ENCODE measurements at regions of chr14 and their contacts with region 1.

Region 1: GRCh38 chr14:22646570-22647254 is 2.6 kb upstream of the OR6J1 start:
- DNase-seq: no peak
- ATAC-seq: no peak
- H3K4me3 ChIP-seq: no peak overlapping the region
- H3K27ac ChIP-seq: peak overlapping the region in 1 of 10 donors; percentile 33
- H3K4me1 ChIP-seq: peaks cover 0 to 14% (median 0%) of the 10 kb centered on the region in 9 donors
- H3K27me3 ChIP-seq: peaks cover 0 to 6% (median 0%) of the 10 kb centered on the region in 7 donors
- CTCF ChIP-seq: no peak

Region 2: GRCh38 chr14:22418631-22419030 is 228.1 kb before region 1 on chr14:
- intact Hi-C with region 1: loop called in 1 of 10 experiments (anchors 10 kb)
- DNase-seq: no peak
- ATAC-seq: no peak
- H3K4me3 ChIP-seq: no peak overlapping the region
- H3K27ac ChIP-seq: no peak overlapping the region
- H3K4me1 ChIP-seq: peaks cover 0 to 7% (median 0%) of the 10 kb centered on the region in 9 donors
- H3K27me3 ChIP-seq: peaks cover 0 to 6% (median 0%) of the 10 kb centered on the region in 7 donors
- CTCF ChIP-seq: no peak

Region 3: DNA sequence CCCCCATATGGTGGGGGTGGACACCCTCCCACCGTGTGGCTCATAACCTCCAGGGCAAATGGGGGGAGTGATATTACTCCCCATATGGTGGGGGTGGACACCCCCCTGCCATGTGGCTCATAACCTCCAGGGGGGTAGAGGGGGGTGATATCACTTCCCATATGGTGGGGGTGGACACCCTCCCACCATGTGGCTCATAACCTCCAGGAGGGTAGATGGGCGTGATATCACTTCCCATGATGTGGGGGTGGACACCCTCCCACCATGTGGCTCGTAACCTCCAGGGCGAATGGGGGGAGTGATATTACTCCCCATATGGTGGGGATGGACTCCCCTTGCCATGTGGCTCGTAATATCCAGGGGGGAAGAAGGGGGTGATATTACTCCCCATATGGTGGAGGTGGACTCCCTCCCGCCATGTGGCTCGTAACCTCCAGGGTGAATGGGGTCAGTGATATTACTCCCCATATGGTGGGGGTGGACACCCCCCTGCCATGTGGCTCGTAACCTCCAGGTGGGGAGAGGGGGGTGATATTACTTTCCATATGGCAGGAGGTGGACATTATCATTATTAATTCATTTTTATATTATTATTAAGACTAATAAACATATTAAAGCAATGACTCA is 68.6 kb after region 1 on chr14:
- intact Hi-C with region 1: no loop called
- DNase-seq: no peak
- ATAC-seq: no peak
- H3K4me3 ChIP-seq: no peak overlapping the region
- H3K27ac ChIP-seq: no peak overlapping the region
- H3K4me1 ChIP-seq: peaks cover 0 to 10% (median 0%) of the 10 kb centered on the region in 9 donors
- H3K27me3 ChIP-seq: peaks cover 0 to 32% (median 14%) of the 10 kb centered on the region in 7 donors
- CTCF ChIP-seq: no peak

Measured in heart right ventricle (tissue), 16 donors.